ENCODE measurements at regions of chr2 and their contacts with region 1.

Region 1: GRCh38 chr2:100427628-100428258 is 10.3 kb upstream of the CHST10 start:
- DNase-seq: peak; percentile 57
- CTCF ChIP-seq: peak; percentile 28

Region 2: DNA sequence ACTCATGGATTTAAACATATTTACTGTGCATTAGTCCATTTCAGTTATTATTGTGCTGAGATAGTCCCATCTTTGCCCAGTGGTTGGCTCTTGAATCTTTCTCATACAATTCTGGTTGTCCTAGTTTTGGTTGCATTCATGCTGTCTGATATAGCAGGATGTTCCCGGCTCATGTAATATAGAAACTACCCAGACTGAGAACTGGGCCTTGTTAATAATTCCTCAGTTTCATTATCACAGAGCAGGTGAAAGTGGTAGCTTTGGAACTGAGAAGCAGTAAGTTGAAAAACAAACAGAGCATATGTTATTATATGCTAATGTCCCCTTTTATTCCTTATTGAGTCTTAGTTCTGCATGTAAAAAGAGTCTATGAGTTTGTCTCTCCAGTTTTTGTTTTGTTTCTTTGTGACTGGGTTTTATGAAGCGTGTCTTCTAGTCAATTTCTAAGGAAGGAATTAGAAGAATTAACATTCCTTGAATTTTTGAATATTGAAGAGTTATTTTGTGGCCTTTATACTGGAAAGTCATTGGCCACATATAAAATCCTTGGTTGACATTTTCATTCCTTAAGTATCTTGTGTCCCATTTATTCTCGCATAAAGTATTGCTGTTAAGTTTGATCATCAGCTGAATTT is 1047.2 kb before region 1 on chr2:
- in situ Hi-C with region 1: no loop called
- DNase-seq: no peak
- CTCF ChIP-seq: no peak

Region 3: DNA sequence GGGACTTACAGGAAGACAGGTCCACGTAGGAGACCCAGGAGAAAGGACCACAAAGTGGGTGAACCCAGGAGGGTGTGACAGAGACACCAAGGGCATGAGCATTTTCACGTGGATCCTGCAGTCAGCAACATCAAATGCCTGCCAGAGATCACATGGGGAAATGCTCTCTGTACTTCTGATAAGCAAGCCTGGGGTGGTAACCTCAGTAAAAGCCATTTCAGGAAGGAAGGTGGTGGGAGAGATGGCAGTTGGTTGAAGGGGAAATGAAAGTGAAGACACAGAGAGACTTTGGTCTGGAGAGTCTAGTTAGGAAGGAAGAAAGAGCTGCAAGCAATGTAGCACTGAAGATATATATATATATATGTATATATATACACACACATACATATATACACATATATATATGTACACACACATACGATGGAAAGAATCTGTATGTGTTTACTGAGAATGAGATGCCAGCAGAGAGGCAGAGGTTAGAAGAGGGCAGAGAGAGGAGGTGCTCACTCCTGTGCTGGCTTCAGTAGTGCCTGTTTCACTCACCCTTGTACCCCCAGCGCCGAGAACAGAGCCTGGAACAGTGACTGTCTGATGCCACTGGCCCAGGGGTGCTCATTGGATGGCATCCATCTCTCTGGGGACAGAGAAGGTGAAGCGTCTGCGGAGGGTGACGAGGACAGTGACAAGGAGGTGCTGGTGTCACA is 600.3 kb before region 1 on chr2:
- in situ Hi-C with region 1: no loop called
- DNase-seq: peak; percentile 35
- CTCF ChIP-seq: no peak

Region 4: DNA sequence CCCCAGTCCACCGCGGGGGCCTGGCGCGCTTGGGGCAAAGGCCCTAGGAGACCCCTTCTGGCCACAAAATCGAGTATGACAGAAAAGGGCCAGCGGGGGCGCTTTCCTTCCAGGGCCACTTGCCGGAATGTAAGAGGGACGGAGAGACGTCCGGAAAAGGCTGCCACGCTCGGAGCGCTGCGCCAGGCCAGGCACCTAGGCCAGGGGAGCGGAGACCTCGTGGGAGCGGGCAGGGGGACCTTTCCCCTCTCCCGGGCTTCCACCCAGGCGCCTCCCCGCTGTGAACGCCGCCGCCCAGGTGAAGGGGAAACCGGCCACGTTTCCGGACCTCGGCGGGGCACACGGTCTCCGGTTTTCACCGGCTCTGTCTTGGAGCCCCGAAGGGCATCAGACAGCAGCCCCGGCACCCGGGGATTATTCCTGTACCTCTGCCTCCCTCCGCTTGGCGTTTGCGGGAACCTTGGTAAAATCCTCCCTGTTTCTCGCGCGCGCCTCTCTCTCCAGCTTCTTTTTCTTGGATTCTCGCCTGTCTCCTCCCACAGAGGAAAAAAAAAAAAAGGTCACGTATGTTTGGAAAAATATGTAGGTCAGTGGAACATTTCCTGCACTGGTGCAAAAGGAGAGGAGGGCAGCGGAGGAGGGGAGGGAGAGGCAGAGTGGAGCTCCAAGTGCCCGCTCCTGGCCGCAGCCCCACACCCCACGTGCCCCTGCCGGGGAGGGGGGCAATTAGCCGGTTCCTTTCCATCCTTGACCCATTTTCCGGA is 391.0 kb after region 1 on chr2:
- in situ Hi-C with region 1: no loop called
- DNase-seq: peak; percentile 45
- CTCF ChIP-seq: no peak

Region 5: GRCh38 chr2:100984892-100985379 is 557.2 kb after region 1 on chr2:
- in situ Hi-C with region 1: loop called (anchors 25 kb)
- DNase-seq: peak; percentile 84
- CTCF ChIP-seq: peak; percentile 85

Measured in GM13976 (cell line).